T-cell (primary cell): ENCODE measurements at regions of chr9 and their contacts with region 1.

Region 1: GRCh38 chr9:2053883-2054845 is 39.0 kb downstream of the SMARCA2 start:
- DNase-seq: peak; percentile 45 to 90 (median 76)
- ATAC-seq: peak; percentile 98 to 99 (median 99)
- H3K4me3 ChIP-seq: peak overlapping the region in 1 of 2 donors; percentile 7
- H3K4me3 Mint-ChIP-seq: peak overlapping the region; percentile 31 to 63 (median 39)
- H3K27ac ChIP-seq: peak overlapping the region; percentile 83
- H3K27ac Mint-ChIP-seq: peak overlapping the region; percentile 87 to 95
- H3K4me1 ChIP-seq: peaks cover 18 to 25% of the 10 kb centered on the region in 2 experiments
- H3K4me1 Mint-ChIP-seq: peaks cover 49 to 75% (median 69%) of the 10 kb centered on the region in 3 donors
- H3K27me3 ChIP-seq: no peaks in the 10 kb centered on the region
- H3K27me3 Mint-ChIP-seq: no peaks in the 10 kb centered on the region

Region 2: GRCh38 chr9:1298027-1298426 is 756.1 kb before region 1 on chr9:
- CTCF ChIA-PET with region 1: no interaction called
- POLR2A ChIA-PET with region 1: no interaction called
- DNase-seq: no peak
- ATAC-seq: no peak
- H3K4me3 ChIP-seq: no peak overlapping the region
- H3K4me3 Mint-ChIP-seq: no peak overlapping the region
- H3K27ac ChIP-seq: no peak overlapping the region
- H3K27ac Mint-ChIP-seq: no peak overlapping the region
- H3K4me1 ChIP-seq: no peaks in the 10 kb centered on the region
- H3K4me1 Mint-ChIP-seq: no peaks in the 10 kb centered on the region
- H3K27me3 ChIP-seq: no peaks in the 10 kb centered on the region
- H3K27me3 Mint-ChIP-seq: peaks cover 0 to 1% of the 10 kb centered on the region in 2 donors

Region 3: GRCh38 chr9:1977026-1977425 is 77.1 kb before region 1 on chr9:
- CTCF ChIA-PET with region 1: interaction called in 1 of 2 experiments, 5 read pairs
- POLR2A ChIA-PET with region 1: interaction called in 1 of 2 experiments, 12 read pairs
- DNase-seq: no peak
- ATAC-seq: no peak
- H3K4me3 ChIP-seq: no peak overlapping the region
- H3K4me3 Mint-ChIP-seq: no peak overlapping the region
- H3K27ac ChIP-seq: no peak overlapping the region
- H3K27ac Mint-ChIP-seq: no peak overlapping the region
- H3K4me1 ChIP-seq: no peaks in the 10 kb centered on the region
- H3K4me1 Mint-ChIP-seq: no peaks in the 10 kb centered on the region
- H3K27me3 ChIP-seq: no peaks in the 10 kb centered on the region
- H3K27me3 Mint-ChIP-seq: no peaks in the 10 kb centered on the region

Region 4: DNA sequence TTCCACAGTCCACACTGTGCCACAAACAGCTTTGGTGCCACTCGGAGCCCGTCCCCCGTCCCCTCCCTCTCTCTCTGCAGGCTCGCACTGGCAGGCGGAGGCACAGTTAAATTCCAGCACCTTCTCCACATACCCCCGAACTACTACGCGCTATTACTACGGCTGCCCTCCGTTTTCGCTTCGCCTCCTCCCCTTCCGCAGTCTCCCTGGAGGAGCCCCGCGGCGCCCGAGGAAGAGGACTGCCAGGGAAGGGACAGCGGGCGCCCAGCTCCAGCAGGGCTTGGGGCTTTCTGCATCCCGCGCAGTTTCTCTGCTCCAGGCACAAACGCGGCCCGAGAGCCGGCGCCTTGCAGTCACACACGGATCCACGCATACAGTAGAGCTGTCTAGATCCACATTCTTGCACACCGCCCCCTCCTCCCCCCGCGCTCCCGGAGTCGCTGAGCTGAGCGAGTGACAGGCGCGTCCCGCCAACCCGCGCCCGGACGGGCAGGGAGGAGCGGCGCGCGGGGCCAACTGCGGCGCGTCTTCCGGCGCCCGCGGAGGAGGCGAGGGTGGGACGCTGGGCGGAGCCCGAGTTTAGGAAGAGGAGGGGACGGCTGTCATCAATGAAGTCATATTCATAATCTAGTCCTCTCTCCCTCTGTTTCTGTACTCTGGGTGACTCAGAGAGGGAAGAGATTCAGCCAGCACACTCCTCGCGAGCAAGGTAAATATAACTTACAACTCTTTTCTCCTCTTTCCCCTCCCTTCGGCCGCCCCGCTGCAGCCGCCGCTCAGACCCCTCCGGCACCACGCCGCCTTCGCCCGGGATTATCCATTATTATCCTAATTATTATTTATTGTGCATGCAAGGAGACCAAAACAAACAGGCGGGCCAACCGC is 39.2 kb before region 1 on chr9 and contains the start of gene SMARCA2:
- CTCF ChIA-PET with region 1: interaction called, 3 read pairs
- POLR2A ChIA-PET with region 1: interaction called, 3 to 20 read pairs
- DNase-seq: peak; percentile 94 to 100 (median 98)
- ATAC-seq: peak; percentile 80 to 86 (median 80)
- H3K4me3 ChIP-seq: peak within 1 kb of the TSS; percentile 83 to 96
- H3K4me3 Mint-ChIP-seq: peak within 1 kb of the TSS; percentile 99 to 100 (median 99)
- H3K27ac ChIP-seq: peak within 1 kb of the TSS; percentile 80
- H3K27ac Mint-ChIP-seq: peak within 1 kb of the TSS; percentile 99 to 100
- H3K4me1 ChIP-seq: peaks cover 18 to 26% of the 10 kb centered on the region in 2 experiments
- H3K4me1 Mint-ChIP-seq: peaks cover 33 to 42% (median 40%) of the 10 kb centered on the region in 3 donors
- H3K27me3 ChIP-seq: peaks cover 0 to 4% of the 10 kb centered on the region in 2 experiments
- H3K27me3 Mint-ChIP-seq: no peaks in the 10 kb centered on the region
- total RNA-seq, gene SMARCA2: 225 to 325 (median 237) TPM